ENCODE measurements at regions of chr17 and their contacts with region 1.

Region 1: GRCh38 chr17:82205719-82206508 is 6.7 kb downstream of the CCDC57 start:
- DNase-seq: peak; percentile 67 to 87 (median 82)
- ATAC-seq: peak; percentile 88
- H3K4me3 ChIP-seq: no peak overlapping the region
- H3K4me3 Mint-ChIP-seq: peak overlapping the region in 9 of 10 donors; percentile 45 to 71 (median 58)
- H3K27ac ChIP-seq: peak overlapping the region; percentile 64
- H3K27ac Mint-ChIP-seq: peak overlapping the region; percentile 87 to 98 (median 95)
- H3K4me1 ChIP-seq: peaks cover 14 to 22% of the 10 kb centered on the region in 2 donors
- H3K4me1 Mint-ChIP-seq: peaks cover 24 to 61% (median 43%) of the 10 kb centered on the region in 7 donors
- H3K27me3 ChIP-seq: no peaks in the 10 kb centered on the region
- H3K27me3 Mint-ChIP-seq: no peaks in the 10 kb centered on the region

Region 2: DNA sequence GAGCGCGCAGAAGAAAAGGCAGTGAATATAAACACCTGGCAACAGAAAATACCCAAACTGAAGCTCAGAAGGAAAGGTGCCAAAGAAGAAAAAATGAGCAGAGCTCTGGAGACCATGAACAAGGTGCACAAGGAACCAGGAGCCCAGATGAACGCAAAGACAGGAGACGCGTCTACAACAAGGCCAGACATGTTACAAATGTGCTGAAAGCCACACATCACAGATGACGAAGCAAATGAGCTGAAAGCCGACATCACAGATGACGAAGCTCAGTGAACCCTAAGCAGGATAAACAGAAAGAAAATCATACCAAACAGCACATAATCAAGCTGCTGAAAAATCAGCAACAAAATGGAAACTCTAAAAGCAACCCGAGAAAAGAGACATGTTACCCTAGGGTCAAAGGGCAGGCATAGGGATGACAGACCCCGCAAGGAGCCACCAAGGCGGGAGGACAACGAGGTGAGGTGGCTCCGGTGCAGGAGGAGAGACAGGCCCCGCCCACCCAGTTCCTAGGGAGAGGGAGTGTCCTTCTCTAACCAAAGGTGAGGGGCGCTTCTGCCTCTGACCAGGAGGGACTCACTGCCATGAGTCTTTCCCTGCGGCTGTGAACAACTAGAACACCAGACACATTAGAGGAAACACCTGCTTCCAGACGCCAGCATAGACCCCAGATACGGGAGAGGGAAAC is 32.4 kb before region 1 on chr17:
- CTCF ChIA-PET with region 1: no interaction called
- POLR2A ChIA-PET with region 1: no interaction called
- intact Hi-C with region 1: no loop called
- DNase-seq: no peak
- ATAC-seq: no peak
- H3K4me3 ChIP-seq: no peak overlapping the region
- H3K4me3 Mint-ChIP-seq: no peak overlapping the region
- H3K27ac ChIP-seq: no peak overlapping the region
- H3K27ac Mint-ChIP-seq: peak overlapping the region in 1 of 9 donors; percentile 8
- H3K4me1 ChIP-seq: no peaks in the 10 kb centered on the region
- H3K4me1 Mint-ChIP-seq: peaks cover 0 to 9% (median 6%) of the 10 kb centered on the region in 7 donors
- H3K27me3 ChIP-seq: no peaks in the 10 kb centered on the region
- H3K27me3 Mint-ChIP-seq: no peaks in the 10 kb centered on the region

Region 3: GRCh38 chr17:82230627-82231311 is 24.9 kb after region 1 on chr17:
- CTCF ChIA-PET with region 1: interaction called, 11 read pairs
- POLR2A ChIA-PET with region 1: interaction called, 7 read pairs
- intact Hi-C with region 1: loop called in 1 of 2 experiments (anchors 1 kb)
- DNase-seq: peak in 2 of 9 donors; percentile 47 to 82
- ATAC-seq: peak; percentile 58
- H3K4me3 ChIP-seq: peak overlapping the region; percentile 35
- H3K4me3 Mint-ChIP-seq: peak overlapping the region in 7 of 10 donors; percentile 74 to 96 (median 79)
- H3K27ac ChIP-seq: peak overlapping the region; percentile 57
- H3K27ac Mint-ChIP-seq: no peak overlapping the region
- H3K4me1 ChIP-seq: peaks cover 26 to 32% of the 10 kb centered on the region in 2 donors
- H3K4me1 Mint-ChIP-seq: peaks cover 6 to 23% (median 10%) of the 10 kb centered on the region in 7 donors
- H3K27me3 ChIP-seq: no peaks in the 10 kb centered on the region
- H3K27me3 Mint-ChIP-seq: no peaks in the 10 kb centered on the region

Region 4: GRCh38 chr17:82236142-82236981 is 30.4 kb after region 1 on chr17:
- CTCF ChIA-PET with region 1: interaction called, 11 read pairs
- POLR2A ChIA-PET with region 1: interaction called, 5 read pairs
- intact Hi-C with region 1: no loop called
- DNase-seq: peak; percentile 58 to 77 (median 71)
- ATAC-seq: peak; percentile 66
- H3K4me3 ChIP-seq: no peak overlapping the region
- H3K4me3 Mint-ChIP-seq: peak overlapping the region in 1 of 10 donors; percentile 17
- H3K27ac ChIP-seq: peak overlapping the region; percentile 46
- H3K27ac Mint-ChIP-seq: peak overlapping the region in 5 of 9 donors; percentile 23 to 82 (median 51)
- H3K4me1 ChIP-seq: peaks cover 10 to 47% of the 10 kb centered on the region in 2 donors
- H3K4me1 Mint-ChIP-seq: peaks cover 5 to 47% (median 33%) of the 10 kb centered on the region in 7 donors
- H3K27me3 ChIP-seq: no peaks in the 10 kb centered on the region
- H3K27me3 Mint-ChIP-seq: no peaks in the 10 kb centered on the region

Region 5: GRCh38 chr17:82623707-82624106 is 417.8 kb after region 1 on chr17:
- CTCF ChIA-PET with region 1: no interaction called
- POLR2A ChIA-PET with region 1: no interaction called
- intact Hi-C with region 1: no loop called
- DNase-seq: no peak
- ATAC-seq: no peak
- H3K4me3 ChIP-seq: no peak overlapping the region
- H3K4me3 Mint-ChIP-seq: no peak overlapping the region
- H3K27ac ChIP-seq: no peak overlapping the region
- H3K27ac Mint-ChIP-seq: peak overlapping the region in 1 of 9 donors; percentile 70
- H3K4me1 ChIP-seq: no peaks in the 10 kb centered on the region
- H3K4me1 Mint-ChIP-seq: peaks cover 0 to 11% (median 0%) of the 10 kb centered on the region in 7 donors
- H3K27me3 ChIP-seq: no peaks in the 10 kb centered on the region
- H3K27me3 Mint-ChIP-seq: no peaks in the 10 kb centered on the region

Measured in naive thymus-derived CD4-positive, alpha-beta T cell (primary cell).